Tibial artery (tissue), 4 donors: ENCODE measurements at regions of chr9 and their contacts with region 1.

Region 1: GRCh38 chr9:97921959-97922724 is at the start of gene TRMO:
- DNase-seq: peak; percentile 98
- H3K4me3 ChIP-seq: peak within 1 kb of the TSS; percentile 58 to 72
- H3K27ac ChIP-seq: peak within 1 kb of the TSS; percentile 90 to 98
- H3K4me1 ChIP-seq: peaks cover 0 to 22% (median 10%) of the 10 kb centered on the region in 4 donors
- H3K27me3 ChIP-seq: peaks cover 0 to 3% of the 10 kb centered on the region in 2 donors
- CTCF ChIP-seq: peak; percentile 57 to 61

Region 2: DNA sequence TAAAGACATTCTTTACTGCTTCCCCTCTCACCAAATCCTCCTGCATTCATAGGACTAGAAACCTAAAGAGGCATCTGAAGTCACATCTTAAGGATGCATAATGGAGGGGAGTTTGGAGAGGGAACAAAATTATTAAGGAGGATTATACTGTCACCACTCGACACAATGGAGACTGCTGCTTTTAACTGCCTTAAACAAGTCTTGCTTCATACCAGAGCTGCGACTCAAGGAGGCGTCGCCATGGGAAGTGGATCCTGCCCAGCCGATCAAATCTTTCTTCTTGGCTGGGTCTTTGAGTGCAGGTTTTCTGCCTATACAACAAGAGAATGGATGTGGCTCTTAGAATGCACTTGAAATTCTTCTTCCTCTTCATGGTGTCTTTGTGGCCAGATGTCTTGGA is 135.8 kb before region 1 on chr9:
- intact Hi-C with region 1: no loop called
- DNase-seq: no peak
- H3K4me3 ChIP-seq: no peak overlapping the region
- H3K27ac ChIP-seq: no peak overlapping the region
- H3K4me1 ChIP-seq: no peaks in the 10 kb centered on the region
- H3K27me3 ChIP-seq: peaks cover 0 to 2% of the 10 kb centered on the region in 2 donors
- CTCF ChIP-seq: no peak

Region 3: DNA sequence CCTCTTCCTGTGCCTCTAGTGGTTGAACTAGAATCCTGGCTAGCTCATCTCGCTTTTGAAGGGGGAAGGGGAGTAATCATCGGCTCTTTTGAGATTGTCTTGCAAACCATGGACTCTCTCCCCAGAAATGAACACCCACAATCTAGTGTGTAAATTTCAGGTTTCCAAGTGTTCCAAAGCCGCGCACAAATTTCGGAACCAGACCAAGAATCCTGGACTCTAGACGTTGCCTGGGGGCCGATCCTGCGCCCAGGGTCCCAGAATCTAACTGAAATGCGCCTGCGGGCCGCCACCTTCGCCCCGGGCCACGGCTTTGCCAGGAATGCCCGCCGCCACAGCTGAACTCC is 73.9 kb before region 1 on chr9:
- intact Hi-C with region 1: no loop called
- DNase-seq: no peak
- H3K4me3 ChIP-seq: peak overlapping the region in 1 of 2 donors; percentile 18
- H3K27ac ChIP-seq: no peak overlapping the region
- H3K4me1 ChIP-seq: peaks cover 0 to 38% (median 25%) of the 10 kb centered on the region in 4 donors
- H3K27me3 ChIP-seq: peaks cover 3 to 81% of the 10 kb centered on the region in 2 donors
- CTCF ChIP-seq: no peak

Region 4: GRCh38 chr9:97860451-97861147 is 61.5 kb before region 1 on chr9:
- intact Hi-C with region 1: no loop called
- DNase-seq: no peak
- H3K4me3 ChIP-seq: no peak overlapping the region
- H3K27ac ChIP-seq: no peak overlapping the region
- H3K4me1 ChIP-seq: no peaks in the 10 kb centered on the region
- H3K27me3 ChIP-seq: peaks cover 0 to 74% of the 10 kb centered on the region in 2 donors
- CTCF ChIP-seq: no peak

Region 5: DNA sequence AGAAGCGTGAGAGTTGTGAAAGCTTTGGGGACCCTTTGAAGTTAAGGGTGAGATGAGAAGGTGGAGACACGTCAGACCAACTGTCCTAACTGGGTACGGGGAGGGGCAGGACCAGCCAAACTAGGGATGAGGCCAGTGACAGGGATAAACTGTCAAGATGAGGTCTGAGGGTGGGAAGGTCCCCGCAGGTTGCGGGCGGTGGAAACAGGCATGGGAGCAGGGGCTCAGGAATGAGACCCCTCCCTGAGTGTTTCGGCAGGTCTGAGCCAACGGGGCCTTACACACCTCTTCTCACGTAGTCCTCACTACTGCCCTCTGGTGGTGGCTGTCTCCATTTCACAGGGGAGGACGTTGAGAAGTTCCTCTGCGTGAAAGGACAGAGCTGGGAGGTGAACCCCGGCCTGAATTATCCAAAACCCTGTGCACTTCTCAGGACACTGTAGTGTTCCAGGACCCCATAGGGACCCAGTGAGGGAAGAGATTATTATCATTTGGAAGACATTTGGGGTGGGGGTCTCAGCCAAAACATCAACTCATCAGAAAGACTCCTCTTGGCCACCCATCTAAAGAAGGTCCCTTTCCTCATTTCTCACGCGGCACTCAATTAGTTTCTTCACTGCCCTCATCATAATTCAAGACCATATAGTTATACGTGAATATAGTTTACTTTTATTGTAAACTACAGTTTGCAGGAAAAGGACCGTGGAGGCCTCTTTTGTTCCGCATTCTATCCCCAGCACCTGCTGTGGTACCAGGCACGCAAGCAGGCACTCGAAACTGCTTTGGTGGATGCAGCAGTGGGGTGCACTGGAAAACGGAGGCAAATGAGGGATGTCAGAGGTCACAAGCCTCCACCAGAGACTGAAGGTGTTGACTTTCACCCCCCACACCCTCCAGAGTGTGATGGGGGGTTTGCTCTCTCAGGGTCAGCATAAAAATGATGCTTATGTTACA is 112.7 kb after region 1 on chr9:
- intact Hi-C with region 1: loop called (anchors 5 kb)
- DNase-seq: peak; percentile 88 to 91
- H3K4me3 ChIP-seq: no peak overlapping the region
- H3K27ac ChIP-seq: peak overlapping the region; percentile 15 to 40
- H3K4me1 ChIP-seq: peaks cover 0 to 28% (median 6%) of the 10 kb centered on the region in 4 donors
- H3K27me3 ChIP-seq: peaks cover 0 to 8% of the 10 kb centered on the region in 2 donors
- CTCF ChIP-seq: peak; percentile 75 to 78

Region 6: GRCh38 chr9:98315551-98316060 is 393.5 kb after region 1 on chr9:
- intact Hi-C with region 1: no loop called
- DNase-seq: peak; percentile 74 to 75
- H3K4me3 ChIP-seq: no peak overlapping the region
- H3K27ac ChIP-seq: no peak overlapping the region
- H3K4me1 ChIP-seq: no peaks in the 10 kb centered on the region
- H3K27me3 ChIP-seq: peaks cover 0 to 6% of the 10 kb centered on the region in 2 donors
- CTCF ChIP-seq: peak; percentile 73 to 84